ENCODE measurements at regions of chr12 and their contacts with region 1.

Region 1: GRCh38 chr12:95608252-95609033 is 57.2 kb upstream of the USP44 start:
- DNase-seq: peak; percentile 85

Region 2: DNA sequence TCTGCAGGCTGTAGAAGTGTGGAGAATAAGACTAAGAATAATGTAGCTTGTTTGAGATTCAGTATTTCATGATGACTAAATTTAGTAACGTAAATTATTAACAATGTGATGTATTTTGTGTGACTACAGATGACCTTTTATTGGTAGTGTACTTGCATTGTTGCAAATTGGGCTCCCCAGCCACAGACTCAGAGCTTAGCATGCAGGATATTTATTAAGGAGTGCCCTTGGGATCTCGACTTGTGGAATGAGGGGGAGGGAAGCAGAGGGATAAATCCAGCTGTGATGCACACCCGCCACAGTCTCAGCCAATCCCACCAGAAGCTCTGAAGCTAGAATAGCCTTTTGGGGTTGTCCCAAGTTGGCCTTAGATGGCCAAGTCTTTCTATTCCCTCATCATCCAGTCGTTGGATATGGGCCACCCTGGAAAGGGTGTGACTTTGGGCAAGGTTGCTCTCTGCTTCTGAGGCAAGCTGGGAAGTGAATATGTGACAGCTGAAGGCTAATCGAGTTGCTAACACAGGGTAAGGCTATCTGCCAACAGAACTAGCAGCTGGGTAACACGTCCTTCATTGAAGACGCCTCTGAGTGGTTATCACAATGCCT is 15.1 kb before region 1 on chr12:
- intact Hi-C with region 1: loop called (anchors 2 kb)
- DNase-seq: no peak

Region 3: GRCh38 chr12:96112733-96113132 is 504.3 kb after region 1 on chr12:
- intact Hi-C with region 1: no loop called
- DNase-seq: no peak

Measured in cardiac septum (tissue), 1 donor.